ENCODE measurements at regions of chr22 and their contacts with region 1.

Region 1: GRCh38 chr22:22748297-22748743 is 103.9 kb downstream of the GGTLC2 start:
- DNase-seq: no peak
- H3K4me3 Mint-ChIP-seq: no peak overlapping the region
- H3K27ac Mint-ChIP-seq: no peak overlapping the region
- H3K4me1 Mint-ChIP-seq: peaks cover 2% of the 10 kb centered on the region
- H3K27me3 Mint-ChIP-seq: peaks cover 10% of the 10 kb centered on the region

Region 2: DNA sequence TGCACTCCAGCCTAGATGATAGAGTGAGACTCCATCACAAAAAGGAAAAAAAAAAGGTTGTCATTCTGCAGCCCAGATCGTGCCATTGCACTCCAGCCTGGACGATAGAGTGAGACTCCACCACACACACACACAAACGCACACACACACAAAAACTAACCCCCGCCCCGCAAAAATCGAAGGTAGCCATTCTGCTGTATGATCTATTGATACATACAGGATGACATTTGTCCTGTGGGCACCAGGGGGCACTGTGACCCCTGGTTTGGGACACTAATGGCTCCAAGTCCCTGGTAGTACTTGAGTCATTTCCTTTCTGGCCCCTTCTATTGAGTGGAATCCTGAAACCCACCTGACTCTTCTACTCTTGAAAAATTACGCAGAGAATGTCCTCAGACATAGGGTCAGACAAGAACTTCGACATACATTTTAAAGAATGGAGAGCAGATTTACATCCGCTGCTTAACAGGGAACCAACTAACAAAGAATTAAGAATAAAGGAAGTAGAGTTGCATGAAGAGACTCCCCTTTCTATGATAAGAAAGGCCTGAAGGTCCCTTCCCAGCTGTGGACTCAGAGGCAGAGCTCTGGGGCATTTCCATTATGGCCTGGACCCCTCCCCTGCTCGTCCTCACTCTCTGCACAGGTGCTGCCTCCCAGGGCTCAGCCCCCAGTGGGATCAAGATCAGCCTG is 154.2 kb before region 1 on chr22:
- intact Hi-C with region 1: loop called (anchors 2 kb)
- DNase-seq: peak; percentile 25
- H3K4me3 Mint-ChIP-seq: no peak overlapping the region
- H3K27ac Mint-ChIP-seq: no peak overlapping the region
- H3K4me1 Mint-ChIP-seq: no peaks in the 10 kb centered on the region
- H3K27me3 Mint-ChIP-seq: peaks cover 6% of the 10 kb centered on the region

Region 3: GRCh38 chr22:22710719-22711531 is 37.4 kb before region 1 on chr22:
- intact Hi-C with region 1: loop called (anchors 1 kb)
- DNase-seq: peak; percentile 56
- H3K4me3 Mint-ChIP-seq: no peak overlapping the region
- H3K27ac Mint-ChIP-seq: no peak overlapping the region
- H3K4me1 Mint-ChIP-seq: no peaks in the 10 kb centered on the region
- H3K27me3 Mint-ChIP-seq: peaks cover 11% of the 10 kb centered on the region

Region 4: DNA sequence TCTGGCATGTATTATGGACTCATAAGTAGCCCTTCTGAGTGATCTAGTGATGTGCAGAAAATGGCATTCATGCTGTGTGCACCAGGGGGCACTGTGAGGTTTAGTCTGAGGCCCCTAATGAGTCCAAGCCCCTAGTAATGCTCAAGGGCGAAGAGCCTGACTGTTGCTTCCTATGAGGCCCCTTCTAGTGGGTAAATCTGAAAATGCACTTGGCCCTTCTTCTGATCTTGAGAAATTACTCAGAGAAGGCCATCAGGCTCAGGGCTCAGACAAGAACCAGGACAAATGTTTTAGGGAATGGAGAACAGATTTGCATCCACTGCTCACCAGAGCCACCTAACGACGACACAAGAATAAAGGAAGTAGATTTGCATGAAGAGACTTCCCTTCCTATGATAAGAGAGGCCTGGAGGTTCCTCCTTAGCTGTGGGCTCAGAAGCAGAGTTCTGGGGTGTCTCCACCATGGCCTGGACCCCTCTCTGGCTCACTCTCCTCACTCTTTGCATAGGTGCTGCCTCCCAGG is 28.1 kb before region 1 on chr22:
- intact Hi-C with region 1: loop called (anchors 2 kb)
- DNase-seq: no peak
- H3K4me3 Mint-ChIP-seq: no peak overlapping the region
- H3K27ac Mint-ChIP-seq: no peak overlapping the region
- H3K4me1 Mint-ChIP-seq: peaks cover 32% of the 10 kb centered on the region
- H3K27me3 Mint-ChIP-seq: peaks cover 14% of the 10 kb centered on the region